ENCODE measurements at regions of chr4 and their contacts with region 1.

Region 1: GRCh38 chr4:113086172-113086695 is 36.8 kb downstream of the ANK2 start:
- DNase-seq: no peak
- H3K4me3 ChIP-seq: no peak overlapping the region
- H3K27ac ChIP-seq: peak overlapping the region in 51 of 59 donors; percentile 0 to 92 (median 58)
- H3K27me3 ChIP-seq: no peaks in the 10 kb centered on the region
- CTCF ChIP-seq: no peak

Region 2: GRCh38 chr4:112951362-112952312 is 134.6 kb before region 1 on chr4:
- intact Hi-C with region 1: loop called in 1 of 2 experiments (anchors 5 kb)
- DNase-seq: no peak
- H3K4me3 ChIP-seq: peak overlapping the region in 45 of 59 donors; percentile 1 to 53 (median 26)
- H3K27ac ChIP-seq: peak overlapping the region; percentile 49 to 98 (median 91)
- H3K27me3 ChIP-seq: no peaks in the 10 kb centered on the region
- CTCF ChIP-seq: peak; percentile 45 to 87 (median 75)

Region 3: DNA sequence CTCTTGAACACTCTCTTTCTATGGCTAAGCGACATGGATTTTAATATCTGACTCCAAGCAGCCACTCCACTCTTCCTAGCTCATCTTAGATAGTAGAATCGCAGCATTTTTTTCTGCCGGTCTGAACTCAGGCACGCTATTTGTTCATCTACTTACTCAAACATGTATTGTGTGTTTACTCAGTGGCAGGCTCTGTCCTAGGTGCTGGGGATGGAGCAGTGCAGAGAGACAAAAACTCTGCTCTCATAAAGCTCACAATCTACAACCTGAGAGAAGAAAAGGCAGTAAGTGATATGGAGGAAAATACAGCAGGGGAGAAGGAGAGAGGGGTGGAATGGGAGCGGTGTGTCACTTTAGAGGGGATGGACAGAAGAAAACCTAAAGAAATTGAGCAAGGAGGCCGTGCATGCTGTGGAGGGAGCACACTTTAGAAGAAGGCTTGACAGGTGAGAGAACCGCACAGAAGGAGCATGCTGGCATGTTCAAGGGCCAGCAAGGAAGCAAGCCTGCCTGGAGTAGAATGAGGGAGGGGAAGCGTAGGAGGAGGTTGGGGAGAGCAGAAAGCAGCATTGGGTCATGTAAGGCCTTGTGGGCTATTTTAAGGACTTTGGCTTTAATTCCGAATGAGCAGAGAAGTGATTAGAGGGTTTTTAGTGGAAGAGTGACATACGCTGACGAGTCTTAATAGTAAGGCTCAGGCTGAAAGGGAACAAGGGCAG is 95.2 kb after region 1 on chr4:
- intact Hi-C with region 1: no loop called
- DNase-seq: peak in 1 of 10 donors; percentile 69
- H3K4me3 ChIP-seq: no peak overlapping the region
- H3K27ac ChIP-seq: peak overlapping the region in 2 of 59 donors; percentile 3 to 70
- H3K27me3 ChIP-seq: no peaks in the 10 kb centered on the region
- CTCF ChIP-seq: no peak